SK-N-SH (cell line): ENCODE measurements at regions of chr7 and their contacts with region 1.

Region 1: DNA sequence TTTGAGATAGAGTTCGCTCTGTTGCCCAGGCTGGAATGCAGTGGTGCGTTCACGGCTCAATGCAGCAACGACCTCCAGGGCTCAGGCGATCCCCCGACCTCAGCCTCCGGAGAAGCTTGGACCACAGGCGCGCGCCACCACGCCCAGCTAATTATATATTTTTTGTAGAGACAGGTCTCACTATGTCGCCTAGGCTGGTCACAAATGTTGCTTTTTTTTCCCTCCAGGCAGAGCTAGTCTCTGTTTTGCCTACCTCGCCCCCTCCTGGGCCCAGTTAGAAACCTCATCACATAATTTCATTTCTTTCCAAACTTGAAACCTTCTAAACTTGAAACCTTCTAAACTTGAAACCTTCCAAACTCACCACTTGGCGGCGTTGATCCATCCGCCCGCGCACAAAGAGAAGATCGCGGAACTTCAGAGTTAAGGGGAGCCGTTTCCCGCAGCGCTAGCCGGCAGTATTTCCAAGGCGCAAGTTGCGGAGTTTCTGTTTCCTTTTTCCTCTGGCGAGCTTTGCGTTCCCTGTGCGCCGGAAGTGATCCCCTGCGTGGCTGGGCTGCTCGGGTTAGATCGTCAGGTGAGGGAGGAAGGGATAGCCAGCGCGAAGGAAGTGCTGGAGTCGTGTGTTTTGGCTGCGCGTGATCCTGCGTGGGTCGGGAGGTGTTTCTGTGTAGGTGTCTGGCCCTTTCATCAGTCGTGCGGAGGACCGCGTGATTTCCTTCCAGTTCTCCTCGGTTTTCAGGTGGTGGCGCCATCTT is at the start of gene SSBP1:
- DNase-seq: peak; percentile 88
- H3K4me3 ChIP-seq: peak within 1 kb of the TSS; percentile 94 to 95
- H3K27ac ChIP-seq: peak within 1 kb of the TSS; percentile 69 to 93
- H3K4me1 ChIP-seq: peaks cover 6 to 26% of the 10 kb centered on the region in 2 experiments; a peak in 2 of 4 replicates
- H3K27me3 ChIP-seq: no peaks in the 10 kb centered on the region
- CTCF ChIP-seq: peak; percentile 99
- EP300 ChIP-seq: peak in 1 of 2 experiments; percentile 59; a peak in 2 of 4 replicates
- RAD21 ChIP-seq: peak; percentile 61
- polyA plus RNA-seq, gene SSBP1: 191 and 212 TPM in 2 replicates

Region 2: DNA sequence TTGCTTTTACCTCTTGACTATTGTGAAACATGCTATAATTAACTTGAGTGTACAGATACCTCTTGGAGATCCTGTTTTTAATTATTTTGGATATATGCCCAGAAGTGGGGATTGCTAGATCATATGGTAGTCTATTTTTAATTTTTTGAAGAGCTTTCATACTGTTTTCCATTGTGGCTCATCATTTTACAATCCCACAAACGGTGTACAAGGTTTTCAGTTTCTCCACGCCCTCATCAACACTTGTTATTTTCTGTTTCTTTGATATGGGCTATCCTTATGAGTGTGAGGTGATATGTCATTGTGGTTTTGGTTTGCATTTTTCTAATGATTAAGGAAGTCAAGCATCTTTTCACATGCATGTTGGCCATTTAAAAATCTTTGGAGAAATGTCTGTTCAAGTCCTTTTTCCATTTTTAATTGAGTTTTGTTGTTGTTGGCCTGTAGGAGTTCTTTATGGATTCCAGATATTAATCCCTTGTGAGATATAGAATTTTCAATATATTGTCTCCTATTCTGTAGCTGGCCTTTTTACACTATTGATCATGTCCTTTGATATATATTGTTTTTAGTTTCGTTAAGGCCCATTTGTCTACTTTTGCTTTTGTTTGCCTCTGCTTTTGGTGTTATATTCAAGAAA is 179.3 kb before region 1 on chr7:
- CTCF ChIA-PET with region 1: no interaction called
- POLR2A ChIA-PET with region 1: no interaction called
- DNase-seq: no peak
- H3K4me3 ChIP-seq: no peak overlapping the region
- H3K27ac ChIP-seq: peak overlapping the region in 1 of 2 experiments; percentile 2; a peak in 1 of 4 replicates
- H3K4me1 ChIP-seq: no peaks in the 10 kb centered on the region; a peak in 1 of 4 replicates
- H3K27me3 ChIP-seq: no peaks in the 10 kb centered on the region
- CTCF ChIP-seq: no peak
- EP300 ChIP-seq: no peak
- RAD21 ChIP-seq: no peak

Region 3: DNA sequence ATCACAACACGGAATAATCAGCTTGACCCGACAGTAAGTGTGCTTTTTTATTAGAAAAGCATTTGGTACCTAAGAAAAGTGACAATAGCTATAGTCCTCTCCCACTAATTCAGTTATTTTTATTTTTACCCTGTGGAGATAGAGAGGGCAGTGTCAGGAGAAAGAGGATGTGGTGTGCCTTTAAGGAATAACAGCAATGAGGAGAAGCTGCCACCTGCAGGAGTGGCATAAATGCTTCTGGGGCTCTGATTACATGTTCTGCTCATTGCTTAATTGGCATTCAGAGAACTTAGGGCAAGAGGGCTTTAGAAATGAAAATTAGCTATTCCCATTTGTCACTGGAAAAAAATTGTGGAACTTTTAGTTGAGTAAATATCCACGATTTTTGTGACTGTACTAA is 96.1 kb before region 1 on chr7:
- CTCF ChIA-PET with region 1: interaction called, 15 read pairs
- POLR2A ChIA-PET with region 1: no interaction called
- DNase-seq: no peak
- H3K4me3 ChIP-seq: no peak overlapping the region
- H3K27ac ChIP-seq: no peak overlapping the region
- H3K4me1 ChIP-seq: no peaks in the 10 kb centered on the region; a peak in 1 of 4 replicates
- H3K27me3 ChIP-seq: no peaks in the 10 kb centered on the region
- CTCF ChIP-seq: no peak
- EP300 ChIP-seq: no peak
- RAD21 ChIP-seq: no peak

Region 4: GRCh38 chr7:141695803-141696289 is 42.2 kb before region 1 on chr7:
- CTCF ChIA-PET with region 1: interaction called, 23 read pairs
- POLR2A ChIA-PET with region 1: no interaction called
- DNase-seq: no peak
- H3K4me3 ChIP-seq: no peak overlapping the region
- H3K27ac ChIP-seq: no peak overlapping the region
- H3K4me1 ChIP-seq: peaks cover 14 to 16% of the 10 kb centered on the region in 2 experiments; a peak in 2 of 4 replicates
- H3K27me3 ChIP-seq: no peaks in the 10 kb centered on the region
- CTCF ChIP-seq: no peak
- EP300 ChIP-seq: no peak
- RAD21 ChIP-seq: no peak

Region 5: GRCh38 chr7:141710301-141710700 is 27.7 kb before region 1 on chr7:
- CTCF ChIA-PET with region 1: interaction called, 26 read pairs
- POLR2A ChIA-PET with region 1: no interaction called
- DNase-seq: no peak
- H3K4me3 ChIP-seq: no peak overlapping the region
- H3K27ac ChIP-seq: no peak overlapping the region
- H3K4me1 ChIP-seq: no peaks in the 10 kb centered on the region
- H3K27me3 ChIP-seq: no peaks in the 10 kb centered on the region
- CTCF ChIP-seq: no peak
- EP300 ChIP-seq: no peak
- RAD21 ChIP-seq: no peak

Region 6: GRCh38 chr7:141722529-141722928 is 15.5 kb before region 1 on chr7:
- CTCF ChIA-PET with region 1: interaction called, 47 read pairs
- POLR2A ChIA-PET with region 1: interaction called, 3 read pairs
- DNase-seq: no peak
- H3K4me3 ChIP-seq: no peak overlapping the region
- H3K27ac ChIP-seq: no peak overlapping the region
- H3K4me1 ChIP-seq: no peaks in the 10 kb centered on the region
- H3K27me3 ChIP-seq: no peaks in the 10 kb centered on the region
- CTCF ChIP-seq: no peak
- EP300 ChIP-seq: no peak
- RAD21 ChIP-seq: no peak

Region 7: DNA sequence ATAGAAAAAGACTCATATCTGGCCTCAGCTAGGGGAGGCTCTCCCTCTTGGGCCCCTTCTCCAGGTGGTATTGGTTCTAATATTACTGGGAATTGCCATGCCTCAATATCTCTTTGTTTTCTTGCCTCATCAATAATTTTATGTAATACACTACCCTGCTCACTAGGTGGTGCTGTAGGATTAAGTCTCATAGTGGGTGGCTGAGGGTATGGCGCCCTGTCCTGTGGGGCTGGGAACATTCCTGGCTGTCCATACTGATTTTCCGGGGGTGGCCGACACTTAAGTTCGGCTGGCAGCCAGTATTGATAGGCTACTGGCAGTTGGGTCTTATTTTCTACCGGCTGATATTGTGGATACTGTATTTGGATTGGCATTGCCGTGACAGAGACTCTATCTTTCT is 16.9 kb after region 1 on chr7:
- CTCF ChIA-PET with region 1: interaction called, 35 read pairs
- POLR2A ChIA-PET with region 1: no interaction called
- DNase-seq: peak; percentile 43
- H3K4me3 ChIP-seq: no peak overlapping the region
- H3K27ac ChIP-seq: no peak overlapping the region
- H3K4me1 ChIP-seq: no peaks in the 10 kb centered on the region
- H3K27me3 ChIP-seq: no peaks in the 10 kb centered on the region
- CTCF ChIP-seq: peak; percentile 56
- EP300 ChIP-seq: no peak
- RAD21 ChIP-seq: peak; percentile 42

Region 8: GRCh38 chr7:141785706-141786552 is 47.9 kb after region 1 on chr7:
- CTCF ChIA-PET with region 1: interaction called, 26 read pairs
- POLR2A ChIA-PET with region 1: interaction called, 4 read pairs
- DNase-seq: peak; percentile 63
- H3K4me3 ChIP-seq: no peak overlapping the region; a peak in 1 of 4 replicates
- H3K27ac ChIP-seq: no peak overlapping the region
- H3K4me1 ChIP-seq: no peaks in the 10 kb centered on the region
- H3K27me3 ChIP-seq: no peaks in the 10 kb centered on the region
- CTCF ChIP-seq: peak; percentile 98
- EP300 ChIP-seq: no peak
- RAD21 ChIP-seq: peak; percentile 80

Region 9: DNA sequence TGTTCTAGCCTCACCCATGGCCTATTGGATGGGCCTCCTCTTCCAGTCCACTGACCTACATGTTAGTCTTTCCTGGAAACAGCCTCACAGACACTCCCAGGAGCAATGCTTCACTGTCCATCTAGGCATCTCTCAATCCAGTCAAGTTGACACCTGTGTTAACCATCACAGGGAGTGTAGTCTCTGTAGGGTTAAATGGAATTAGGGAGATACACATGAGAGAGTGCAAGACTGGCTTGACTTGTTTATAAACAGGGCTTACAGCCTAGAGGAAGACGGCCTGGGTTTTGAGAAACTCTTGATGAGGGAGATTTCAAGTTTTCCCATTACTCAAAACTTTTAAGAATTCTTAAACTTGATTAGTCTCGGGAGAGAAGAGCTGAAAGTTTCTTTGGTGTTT is 122.2 kb after region 1 on chr7:
- CTCF ChIA-PET with region 1: no interaction called
- POLR2A ChIA-PET with region 1: no interaction called
- DNase-seq: no peak
- H3K4me3 ChIP-seq: no peak overlapping the region
- H3K27ac ChIP-seq: no peak overlapping the region
- H3K4me1 ChIP-seq: no peaks in the 10 kb centered on the region
- H3K27me3 ChIP-seq: no peaks in the 10 kb centered on the region
- CTCF ChIP-seq: no peak
- EP300 ChIP-seq: no peak
- RAD21 ChIP-seq: no peak